Activated naive CD4-positive, alpha-beta T cell treated with anti-CD3 and anti-CD28 coated beads for 36 hours (primary cell): ENCODE measurements at regions of chr16 and their contacts with region 1.

Region 1: DNA sequence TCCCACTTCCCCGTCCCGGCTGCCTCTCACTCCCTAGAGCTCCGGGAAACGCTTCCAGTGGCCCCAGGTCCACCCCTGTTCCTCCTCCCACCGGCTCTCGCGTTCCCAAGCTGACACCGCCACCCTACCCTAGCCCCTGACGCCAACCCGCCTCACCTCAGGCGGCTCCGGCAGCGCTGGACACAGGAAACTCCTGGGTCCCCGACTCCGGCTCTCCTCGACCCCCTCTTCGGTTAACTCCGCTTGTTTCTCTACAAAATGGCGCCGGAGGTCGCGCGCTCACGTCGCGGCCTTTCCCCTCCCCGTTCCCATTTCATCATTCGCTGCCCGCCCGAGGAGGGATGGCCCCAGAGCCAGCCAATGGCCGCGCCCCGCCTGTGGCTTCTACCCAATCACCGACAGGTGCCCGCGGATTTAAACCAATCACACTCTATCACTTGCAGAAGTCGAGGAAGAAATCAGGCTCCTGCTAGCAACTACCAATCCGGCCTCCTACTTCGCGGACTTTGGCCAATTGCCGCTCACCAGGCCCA is at the start of gene CNOT1:
- DNase-seq: peak; percentile 99
- H3K4me3 Mint-ChIP-seq: peak within 1 kb of the TSS; percentile 99
- H3K27ac Mint-ChIP-seq: peak within 1 kb of the TSS; percentile 100
- H3K4me1 Mint-ChIP-seq: peaks cover 25% of the 10 kb centered on the region
- H3K27me3 Mint-ChIP-seq: peaks cover 1% of the 10 kb centered on the region
- total RNA-seq, gene CNOT1: 283 to 287 TPM

Region 2: GRCh38 chr16:58249780-58250478 is 379.7 kb before region 1 on chr16:
- CTCF ChIA-PET with region 1: no interaction called
- intact Hi-C with region 1: loop called (anchors 5 kb)
- DNase-seq: peak; percentile 82
- H3K4me3 Mint-ChIP-seq: peak overlapping the region; percentile 85
- H3K27ac Mint-ChIP-seq: no peak overlapping the region
- H3K4me1 Mint-ChIP-seq: peaks cover 6% of the 10 kb centered on the region
- H3K27me3 Mint-ChIP-seq: peaks cover under 1% of the 10 kb centered on the region

Region 3: GRCh38 chr16:58392215-58393137 is 237.2 kb before region 1 on chr16 and contains the start of gene GINS3:
- CTCF ChIA-PET with region 1: no interaction called
- intact Hi-C with region 1: loop called (anchors 1 kb)
- DNase-seq: peak; percentile 94
- H3K4me3 Mint-ChIP-seq: peak within 1 kb of the TSS; percentile 98
- H3K27ac Mint-ChIP-seq: peak within 1 kb of the TSS; percentile 99
- H3K4me1 Mint-ChIP-seq: peaks cover 16% of the 10 kb centered on the region
- H3K27me3 Mint-ChIP-seq: no peaks in the 10 kb centered on the region
- total RNA-seq, gene GINS3: 19.2 to 20.3 TPM

Region 4: GRCh38 chr16:58515125-58515870 is 114.3 kb before region 1 on chr16 and contains the start of gene SETD6:
- CTCF ChIA-PET with region 1: no interaction called
- intact Hi-C with region 1: loop called (anchors 1 kb)
- DNase-seq: peak; percentile 78
- H3K4me3 Mint-ChIP-seq: peak within 1 kb of the TSS; percentile 88
- H3K27ac Mint-ChIP-seq: peak within 1 kb of the TSS; percentile 74
- H3K4me1 Mint-ChIP-seq: peaks cover 45% of the 10 kb centered on the region
- H3K27me3 Mint-ChIP-seq: no peaks in the 10 kb centered on the region
- total RNA-seq, gene SETD6: 8.1 to 8.5 TPM

Region 5: DNA sequence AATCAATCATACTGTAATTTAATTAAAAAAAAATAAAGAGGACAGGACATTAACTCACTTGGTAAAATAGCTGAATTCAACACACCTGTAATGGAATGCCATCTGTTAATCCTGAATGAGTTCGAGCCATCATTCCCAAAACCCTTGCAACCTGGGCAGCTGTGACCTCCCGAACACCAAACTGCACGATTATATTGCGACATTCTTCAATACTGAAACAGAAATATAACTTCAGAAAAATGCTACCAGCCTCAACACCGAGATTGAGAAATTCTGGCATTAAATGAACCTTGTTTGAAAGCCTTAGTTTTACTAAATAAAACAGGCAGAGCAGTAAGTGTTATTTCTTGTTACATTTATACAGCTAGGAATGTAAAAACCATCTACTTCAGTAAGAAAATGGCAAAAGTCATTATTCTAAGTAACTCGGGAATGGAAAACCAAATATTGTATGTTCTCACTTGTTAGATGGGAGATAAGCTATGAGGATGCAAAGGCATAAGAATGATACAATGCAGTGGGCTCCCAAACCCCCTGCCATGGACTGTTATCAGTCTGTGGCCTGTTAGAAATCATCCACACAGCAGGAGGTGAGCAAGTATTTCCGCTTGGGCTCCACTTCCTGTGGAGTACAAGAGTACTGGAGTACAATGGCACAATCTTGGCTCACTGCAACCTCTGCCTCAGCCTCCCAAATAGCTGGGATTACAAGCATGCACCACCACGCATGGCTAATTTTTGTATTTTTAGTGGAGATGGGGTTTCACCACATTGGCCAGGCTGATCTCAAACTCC is 46.5 kb before region 1 on chr16:
- CTCF ChIA-PET with region 1: no interaction called
- intact Hi-C with region 1: loop called (anchors 5 kb)
- DNase-seq: peak; percentile 12
- H3K4me3 Mint-ChIP-seq: no peak overlapping the region
- H3K27ac Mint-ChIP-seq: no peak overlapping the region
- H3K4me1 Mint-ChIP-seq: peaks cover 11% of the 10 kb centered on the region
- H3K27me3 Mint-ChIP-seq: no peaks in the 10 kb centered on the region

Region 6: GRCh38 chr16:58644805-58645484 is 15.3 kb after region 1 on chr16:
- CTCF ChIA-PET with region 1: no interaction called
- intact Hi-C with region 1: no loop called
- DNase-seq: no peak
- H3K4me3 Mint-ChIP-seq: no peak overlapping the region
- H3K27ac Mint-ChIP-seq: no peak overlapping the region
- H3K4me1 Mint-ChIP-seq: no peaks in the 10 kb centered on the region
- H3K27me3 Mint-ChIP-seq: no peaks in the 10 kb centered on the region

Region 7: GRCh38 chr16:58684354-58685083 is 54.9 kb after region 1 on chr16 and contains the start of gene SLC38A7:
- CTCF ChIA-PET with region 1: no interaction called
- intact Hi-C with region 1: loop called (anchors 1 kb)
- DNase-seq: peak; percentile 78
- H3K4me3 Mint-ChIP-seq: peak within 1 kb of the TSS; percentile 89
- H3K27ac Mint-ChIP-seq: peak within 1 kb of the TSS; percentile 8
- H3K4me1 Mint-ChIP-seq: peaks cover 15% of the 10 kb centered on the region
- H3K27me3 Mint-ChIP-seq: no peaks in the 10 kb centered on the region
- total RNA-seq, gene SLC38A7: 4.3 to 4.6 TPM